ENCODE measurements at regions of chr6 and their contacts with region 1.

Region 1: GRCh38 chr6:36594029-36594815 is at the start of gene SRSF3:
- DNase-seq: peak; percentile 87 to 95
- H3K4me3 ChIP-seq: peak within 1 kb of the TSS; percentile 93 to 100 (median 96)
- H3K27ac ChIP-seq: peak within 1 kb of the TSS; percentile 97
- H3K4me1 ChIP-seq: peaks cover 0 to 3% (median 1%) of the 10 kb centered on the region in 4 experiments; a peak in 3 of 7 replicates
- H3K27me3 ChIP-seq: no peaks in the 10 kb centered on the region
- CTCF ChIP-seq: peak in 2 of 3 experiments; percentile 38 to 44; a peak in 3 of 4 replicates
- EP300 ChIP-seq: no peak; a peak in 1 of 3 replicates
- POLR2A ChIP-seq: peak; percentile 100
- RAD21 ChIP-seq: no peak; a peak in 1 of 4 replicates
- total RNA-seq, gene SRSF3: 689 and 705 TPM in 2 replicates

Region 2: DNA sequence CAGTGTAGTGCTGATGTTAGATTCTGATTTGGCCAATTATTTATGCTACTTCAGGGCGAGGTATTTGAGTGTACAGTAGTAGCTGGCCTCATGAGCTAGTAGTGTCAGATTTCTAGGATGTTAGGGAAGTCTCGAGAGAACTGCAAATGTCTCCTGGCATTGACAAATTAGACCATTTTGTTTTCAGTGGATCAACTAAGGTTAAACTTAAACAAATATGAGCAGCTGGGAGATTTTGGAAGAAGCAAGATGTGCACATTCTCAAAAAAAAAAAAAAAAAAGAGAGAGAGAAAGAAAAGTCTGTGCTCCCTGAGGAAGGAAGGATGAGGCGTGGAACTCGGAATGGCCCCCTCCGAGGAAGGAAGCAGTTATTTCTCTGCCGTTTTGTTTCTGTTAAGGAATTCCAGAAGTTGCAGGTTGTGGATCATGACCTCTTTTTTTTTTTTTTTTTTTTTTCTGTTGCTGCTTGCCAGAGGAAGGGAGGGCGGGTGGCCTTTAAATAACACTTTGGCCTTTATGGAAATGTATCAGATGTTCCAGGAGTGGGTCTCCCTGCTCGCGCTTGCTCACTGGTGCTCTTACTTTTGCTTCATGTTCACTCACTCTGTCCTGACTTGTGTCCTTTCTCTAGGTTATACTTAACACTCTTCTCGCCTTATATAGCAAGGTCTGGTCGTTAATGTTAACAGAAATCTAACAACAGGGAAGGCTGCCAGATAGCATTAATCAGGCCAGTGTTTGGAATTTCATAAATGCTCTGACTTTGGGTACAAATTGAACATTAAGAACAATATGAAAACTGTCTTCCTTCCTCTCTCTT is 1577.5 kb before region 1 on chr6:
- CTCF ChIA-PET with region 1: no interaction called
- POLR2A ChIA-PET with region 1: no interaction called
- DNase-seq: no peak
- H3K4me3 ChIP-seq: no peak overlapping the region
- H3K27ac ChIP-seq: no peak overlapping the region
- H3K4me1 ChIP-seq: peaks cover 2 to 10% (median 7%) of the 10 kb centered on the region in 4 experiments; a peak in 5 of 7 replicates
- H3K27me3 ChIP-seq: no peaks in the 10 kb centered on the region
- CTCF ChIP-seq: no peak
- EP300 ChIP-seq: no peak
- POLR2A ChIP-seq: no peak
- RAD21 ChIP-seq: no peak

Region 3: GRCh38 chr6:36360241-36361054 is 233.8 kb before region 1 on chr6:
- CTCF ChIA-PET with region 1: no interaction called
- POLR2A ChIA-PET with region 1: no interaction called
- DNase-seq: peak; percentile 7 to 82
- H3K4me3 ChIP-seq: no peak overlapping the region
- H3K27ac ChIP-seq: no peak overlapping the region
- H3K4me1 ChIP-seq: no peaks in the 10 kb centered on the region
- H3K27me3 ChIP-seq: peaks cover 0 to 1% (median 0%) of the 10 kb centered on the region in 4 experiments; a peak in 1 of 7 replicates
- CTCF ChIP-seq: peak; percentile 52 to 92 (median 88)
- EP300 ChIP-seq: no peak
- POLR2A ChIP-seq: no peak
- RAD21 ChIP-seq: peak; percentile 93 to 95

Region 4: DNA sequence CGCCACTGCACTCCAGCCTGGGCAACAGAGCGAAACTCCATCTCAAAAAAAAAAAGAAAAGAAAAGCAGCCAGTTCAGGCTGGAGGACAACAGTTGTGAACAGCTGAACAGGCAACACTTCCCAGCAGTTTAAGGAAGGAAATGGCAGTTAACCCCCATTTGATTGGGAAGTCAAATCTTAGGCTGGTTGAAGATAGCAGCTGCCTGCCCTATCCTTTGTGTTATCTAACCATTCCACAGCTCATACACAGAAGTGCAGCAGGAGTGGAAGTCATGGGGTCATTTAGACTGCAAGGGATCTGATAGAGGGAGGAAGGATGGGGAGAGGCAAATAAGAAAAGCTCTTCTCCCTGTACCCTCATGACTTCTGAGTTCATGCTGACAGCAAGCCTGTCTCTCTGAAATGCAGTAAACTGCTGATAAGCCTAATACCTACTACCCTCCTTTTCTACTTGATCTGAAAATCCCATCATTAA is 116.1 kb before region 1 on chr6:
- CTCF ChIA-PET with region 1: no interaction called
- POLR2A ChIA-PET with region 1: no interaction called
- DNase-seq: no peak
- H3K4me3 ChIP-seq: no peak overlapping the region
- H3K27ac ChIP-seq: no peak overlapping the region
- H3K4me1 ChIP-seq: no peaks in the 10 kb centered on the region
- H3K27me3 ChIP-seq: no peaks in the 10 kb centered on the region
- CTCF ChIP-seq: no peak
- EP300 ChIP-seq: no peak
- POLR2A ChIP-seq: no peak
- RAD21 ChIP-seq: no peak

Region 5: GRCh38 chr6:36546920-36547645 is 47.1 kb before region 1 on chr6 and contains the start of gene STK38:
- CTCF ChIA-PET with region 1: no interaction called
- POLR2A ChIA-PET with region 1: interaction called, 18 read pairs
- DNase-seq: peak; percentile 83 to 94
- H3K4me3 ChIP-seq: peak within 1 kb of the TSS; percentile 84 to 97 (median 92)
- H3K27ac ChIP-seq: peak within 1 kb of the TSS; percentile 81
- H3K4me1 ChIP-seq: peaks cover 0 to 9% (median 4%) of the 10 kb centered on the region in 4 experiments; a peak in 4 of 7 replicates
- H3K27me3 ChIP-seq: no peaks in the 10 kb centered on the region
- CTCF ChIP-seq: no peak
- EP300 ChIP-seq: no peak
- POLR2A ChIP-seq: peak; percentile 52 to 86
- RAD21 ChIP-seq: no peak; a peak in 1 of 4 replicates
- total RNA-seq, gene STK38: 18.5 and 19.8 TPM in 2 replicates

Region 6: DNA sequence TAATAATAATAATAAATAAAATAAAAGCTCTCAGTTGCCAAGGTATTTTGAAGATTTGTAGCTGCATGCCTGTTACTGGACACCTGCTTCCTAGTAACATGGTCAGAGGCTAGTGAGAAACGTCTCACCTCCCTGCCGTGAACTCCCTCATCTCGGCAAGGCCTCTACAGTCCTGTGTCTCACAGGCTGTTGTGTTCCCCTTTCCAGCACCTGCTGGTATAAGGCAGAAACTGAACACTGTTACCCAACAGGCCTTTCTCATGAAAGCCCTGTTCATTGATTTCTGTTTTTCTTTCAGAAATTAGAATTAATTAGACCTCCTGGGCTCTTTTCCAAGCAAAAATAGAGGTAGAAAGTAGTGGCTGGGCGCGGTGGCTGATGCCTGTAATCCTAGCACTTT is 17.7 kb before region 1 on chr6:
- CTCF ChIA-PET with region 1: interaction called, 7 read pairs
- POLR2A ChIA-PET with region 1: interaction called, 174 read pairs
- DNase-seq: no peak
- H3K4me3 ChIP-seq: no peak overlapping the region
- H3K27ac ChIP-seq: no peak overlapping the region
- H3K4me1 ChIP-seq: no peaks in the 10 kb centered on the region
- H3K27me3 ChIP-seq: no peaks in the 10 kb centered on the region
- CTCF ChIP-seq: no peak
- EP300 ChIP-seq: no peak
- POLR2A ChIP-seq: no peak
- RAD21 ChIP-seq: no peak

Measured in H1 (cell line).